ENCODE measurements at regions of chr16 and their contacts with region 1.

Region 1: DNA sequence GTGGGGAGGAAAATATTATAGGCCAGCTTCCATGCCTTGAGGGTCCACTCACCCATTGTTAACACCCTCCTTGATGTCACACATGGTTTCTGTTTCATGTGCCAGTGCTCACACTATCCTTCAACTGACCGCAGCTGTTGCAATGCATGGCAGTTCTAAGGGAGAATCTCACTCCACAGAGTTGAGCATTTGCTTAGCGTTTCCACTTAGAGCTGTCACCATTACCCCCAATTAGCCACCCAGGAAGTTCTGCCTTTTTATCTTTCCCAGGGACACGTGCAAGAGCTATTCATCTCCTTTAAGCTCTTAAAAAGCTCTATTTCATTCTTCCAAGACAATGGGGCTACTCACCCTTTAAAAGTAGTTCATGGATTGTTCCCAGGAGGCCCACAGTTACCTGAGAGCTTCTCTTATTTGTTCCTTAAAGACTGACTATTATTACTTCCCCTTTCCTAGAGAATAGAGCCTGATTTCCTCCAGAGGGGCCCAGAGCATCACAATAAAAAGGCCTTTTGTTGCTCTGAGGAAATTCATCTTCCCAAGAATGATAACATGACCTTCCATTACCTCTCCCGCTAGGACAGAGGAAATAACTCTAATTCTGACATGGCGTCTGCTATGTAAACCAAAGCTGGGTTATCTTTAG is 126.8 kb downstream of the CACNG3 start:
- DNase-seq: no peak
- H3K4me3 ChIP-seq: no peak overlapping the region
- H3K27ac ChIP-seq: no peak overlapping the region
- H3K4me1 ChIP-seq: no peaks in the 10 kb centered on the region
- H3K27me3 ChIP-seq: peaks cover 26% of the 10 kb centered on the region
- CTCF ChIP-seq: no peak

Region 2: DNA sequence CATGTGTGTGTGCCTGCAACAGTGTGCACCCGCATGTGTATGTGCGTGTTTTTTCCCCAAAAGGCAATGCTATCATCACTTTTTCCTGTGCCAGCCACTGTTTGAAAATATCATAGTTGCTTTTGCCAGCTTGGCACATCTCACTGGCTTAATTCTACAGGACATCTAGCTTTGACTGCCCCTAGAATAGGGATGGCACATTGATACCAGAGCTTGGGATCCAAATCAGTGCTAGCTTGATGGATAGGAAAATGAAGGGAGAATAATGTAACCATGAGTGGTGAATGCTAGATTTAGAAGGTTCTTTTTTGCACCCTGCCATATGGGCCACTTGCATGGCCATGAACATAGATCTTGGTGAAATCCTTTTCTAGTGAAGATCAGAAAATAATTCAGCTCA is 1381.6 kb after region 1 on chr16:
- CTCF ChIA-PET with region 1: interaction called, 28 read pairs
- POLR2A ChIA-PET with region 1: no interaction called
- intact Hi-C with region 1: no loop called
- DNase-seq: no peak
- H3K4me3 ChIP-seq: no peak overlapping the region
- H3K27ac ChIP-seq: no peak overlapping the region
- H3K4me1 ChIP-seq: no peaks in the 10 kb centered on the region
- H3K27me3 ChIP-seq: peaks cover 25% of the 10 kb centered on the region
- CTCF ChIP-seq: no peak

Measured in PC-9 (cell line).